ENCODE measurements at regions of chr18 and their contacts with region 1.

Region 1: DNA sequence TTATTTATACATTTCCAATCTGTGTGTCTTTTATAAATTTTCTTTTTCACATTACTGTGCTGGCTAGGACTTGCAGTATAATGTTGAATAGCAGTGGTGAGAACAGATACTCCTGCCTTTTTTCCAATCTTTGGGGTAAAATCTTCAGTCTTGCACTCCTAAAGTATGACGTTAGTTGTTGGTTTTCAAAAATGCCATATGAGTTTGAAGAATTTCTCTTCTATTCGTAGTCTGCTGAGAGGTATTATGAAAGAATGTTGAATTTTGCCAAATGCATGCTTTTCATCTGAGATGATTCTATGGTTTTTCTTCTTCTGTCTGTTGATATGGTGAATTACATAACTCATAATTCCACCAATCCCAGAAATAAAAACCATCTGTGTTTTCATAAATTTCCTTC is 335.3 kb upstream of the CHST9 start:
- H3K4me3 Mint-ChIP-seq: no peak overlapping the region
- H3K27ac Mint-ChIP-seq: no peak overlapping the region
- H3K4me1 Mint-ChIP-seq: no peaks in the 10 kb centered on the region
- H3K27me3 Mint-ChIP-seq: no peaks in the 10 kb centered on the region

Region 2: DNA sequence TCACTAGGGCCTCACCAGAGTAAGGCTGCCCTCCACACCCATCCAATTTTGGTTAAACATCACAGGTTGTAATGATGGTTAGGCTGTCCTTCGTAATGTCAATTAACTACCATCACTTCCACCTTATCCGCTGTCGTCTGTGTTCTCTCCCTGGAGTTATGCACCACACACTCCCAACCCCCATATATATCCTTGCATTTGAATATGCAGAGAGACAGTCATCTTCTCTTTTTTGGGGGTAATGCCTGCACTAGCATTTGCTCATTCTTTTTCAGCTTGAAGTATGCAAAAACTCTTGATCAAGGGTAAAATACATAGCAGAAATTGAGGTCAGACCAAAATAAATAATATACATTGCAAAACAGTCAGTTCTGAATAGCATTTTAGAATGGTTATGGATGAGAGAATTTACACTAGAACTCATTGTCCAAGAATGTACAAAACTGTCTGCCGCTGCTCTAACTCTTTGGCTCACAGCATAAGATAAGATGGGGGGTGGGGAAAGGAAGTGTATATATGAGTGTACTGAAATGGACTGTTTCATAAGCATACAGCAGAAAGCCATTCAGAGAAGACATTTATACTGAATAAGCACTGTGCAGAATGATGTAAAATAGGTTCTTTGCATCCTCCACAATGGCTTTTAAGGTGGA is 62.5 kb after region 1 on chr18:
- intact Hi-C with region 1: loop called (anchors 10 kb)
- H3K4me3 Mint-ChIP-seq: no peak overlapping the region
- H3K27ac Mint-ChIP-seq: no peak overlapping the region
- H3K4me1 Mint-ChIP-seq: no peaks in the 10 kb centered on the region
- H3K27me3 Mint-ChIP-seq: no peaks in the 10 kb centered on the region